Posterior cingulate gyrus (tissue), 11 donors: ENCODE measurements at regions of chr2 and their contacts with region 1.

Region 1: GRCh38 chr2:196441527-196441926 is 198.0 kb upstream of the CCDC150 start:
- DNase-seq: no peak

Region 2: DNA sequence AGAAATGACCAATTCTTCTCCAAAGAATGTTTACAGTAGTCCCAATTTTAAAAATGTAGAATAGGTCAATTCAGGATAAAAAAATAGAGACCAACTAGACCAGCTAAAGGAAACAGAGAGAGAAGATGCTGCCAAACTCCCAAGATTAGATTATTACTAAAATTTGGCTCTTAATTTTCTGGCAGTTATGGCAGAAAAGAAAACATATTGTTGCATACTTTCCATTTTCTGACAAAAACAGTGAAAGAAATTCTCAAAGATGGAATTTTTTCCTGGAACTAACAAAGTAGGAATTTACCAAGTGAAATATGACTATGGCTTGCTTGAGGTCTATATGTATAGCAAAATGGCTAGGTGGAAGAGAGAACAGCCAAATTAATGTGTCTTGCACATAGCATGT is 131.8 kb before region 1 on chr2:
- intact Hi-C with region 1: loop called (anchors 10 kb)
- DNase-seq: no peak